HepG2 (cell line): ENCODE measurements at regions of chr5 and their contacts with region 1.

Region 1: DNA sequence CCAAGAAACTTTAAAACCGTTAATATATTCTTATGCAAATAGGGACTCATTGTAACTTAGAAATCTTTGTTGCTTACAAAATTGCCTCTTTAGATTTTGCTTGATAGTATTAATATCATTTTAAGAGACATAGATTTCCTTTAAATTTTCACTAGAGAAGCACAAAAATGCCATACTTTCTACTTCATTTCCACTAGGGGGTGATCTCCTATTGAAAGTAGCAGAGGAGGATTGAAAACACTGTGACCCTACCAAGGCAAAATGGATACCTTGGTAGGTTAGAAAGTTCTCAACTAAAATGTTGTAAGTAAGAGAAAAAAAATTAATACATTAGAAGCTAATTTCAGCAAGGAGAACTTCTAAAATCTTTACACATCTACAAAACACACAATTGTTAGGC is 204.9 kb downstream of the CHSY3 start:
- DNase-seq: peak; percentile 27
- ATAC-seq: 0 out of 3 replicates have a peak, but pooled peaks have one; percentile 42
- H3K4me3 ChIP-seq: no peak overlapping the region
- H3K27ac ChIP-seq: no peak overlapping the region
- H3K4me1 ChIP-seq: no peaks in the 10 kb centered on the region
- H3K27me3 ChIP-seq: no peaks in the 10 kb centered on the region
- CTCF ChIP-seq: peak; percentile 51
- EP300 ChIP-seq: no peak
- POLR2A ChIP-seq: no peak
- RAD21 ChIP-seq: no peak

Region 2: DNA sequence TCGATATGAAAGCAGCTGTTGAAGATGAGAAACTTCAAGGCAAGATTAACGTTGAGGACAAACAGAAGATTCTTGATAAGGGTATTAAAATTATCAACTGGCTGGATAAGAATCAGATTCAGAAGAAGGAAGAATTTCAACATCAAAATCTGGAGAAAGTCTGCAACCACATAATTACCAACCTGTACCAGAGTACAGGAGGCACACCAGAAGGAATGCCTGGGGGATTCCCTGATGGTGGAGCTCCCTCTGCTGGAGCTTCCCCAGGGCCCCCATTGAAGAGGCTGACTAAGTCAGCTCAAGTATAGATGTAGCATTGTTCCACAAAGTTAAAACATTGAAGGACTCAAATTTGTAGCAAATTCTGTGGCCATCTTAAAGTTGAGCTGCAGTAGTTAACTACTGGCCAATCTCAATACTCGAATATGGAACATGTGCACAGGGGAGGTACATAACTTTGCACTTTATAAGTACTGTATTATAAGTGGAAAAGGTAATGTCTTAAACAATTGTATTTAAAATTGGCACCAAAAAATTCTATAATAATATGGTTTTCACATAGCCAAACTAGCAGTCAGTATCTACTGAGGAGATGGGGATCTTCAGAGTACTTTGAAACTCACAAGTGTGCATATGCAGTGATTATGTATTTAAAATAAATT is 32.6 kb after region 1 on chr5:
- CTCF ChIA-PET with region 1: no interaction called
- POLR2A ChIA-PET with region 1: no interaction called
- in situ Hi-C with region 1: no loop called
- intact Hi-C with region 1: loop called (anchors 1 kb)
- DNase-seq: no peak
- ATAC-seq: peak; percentile 73; the same call in 2 of the 3 replicates
- H3K4me3 ChIP-seq: no peak overlapping the region
- H3K27ac ChIP-seq: no peak overlapping the region
- H3K4me1 ChIP-seq: no peaks in the 10 kb centered on the region
- H3K27me3 ChIP-seq: no peaks in the 10 kb centered on the region
- CTCF ChIP-seq: peak; percentile 36
- EP300 ChIP-seq: no peak
- POLR2A ChIP-seq: no peak
- RAD21 ChIP-seq: no peak

Region 3: GRCh38 chr5:130720355-130720754 is 611.2 kb after region 1 on chr5:
- CTCF ChIA-PET with region 1: interaction called, 5 read pairs
- POLR2A ChIA-PET with region 1: no interaction called
- in situ Hi-C with region 1: loop called (anchors 25 kb)
- intact Hi-C with region 1: no loop called
- DNase-seq: peak; percentile 39
- ATAC-seq: peak; percentile 97
- H3K4me3 ChIP-seq: no peak overlapping the region
- H3K27ac ChIP-seq: no peak overlapping the region
- H3K4me1 ChIP-seq: no peaks in the 10 kb centered on the region
- H3K27me3 ChIP-seq: no peaks in the 10 kb centered on the region
- CTCF ChIP-seq: peak; percentile 59
- EP300 ChIP-seq: no peak
- POLR2A ChIP-seq: no peak
- RAD21 ChIP-seq: no peak

Region 4: DNA sequence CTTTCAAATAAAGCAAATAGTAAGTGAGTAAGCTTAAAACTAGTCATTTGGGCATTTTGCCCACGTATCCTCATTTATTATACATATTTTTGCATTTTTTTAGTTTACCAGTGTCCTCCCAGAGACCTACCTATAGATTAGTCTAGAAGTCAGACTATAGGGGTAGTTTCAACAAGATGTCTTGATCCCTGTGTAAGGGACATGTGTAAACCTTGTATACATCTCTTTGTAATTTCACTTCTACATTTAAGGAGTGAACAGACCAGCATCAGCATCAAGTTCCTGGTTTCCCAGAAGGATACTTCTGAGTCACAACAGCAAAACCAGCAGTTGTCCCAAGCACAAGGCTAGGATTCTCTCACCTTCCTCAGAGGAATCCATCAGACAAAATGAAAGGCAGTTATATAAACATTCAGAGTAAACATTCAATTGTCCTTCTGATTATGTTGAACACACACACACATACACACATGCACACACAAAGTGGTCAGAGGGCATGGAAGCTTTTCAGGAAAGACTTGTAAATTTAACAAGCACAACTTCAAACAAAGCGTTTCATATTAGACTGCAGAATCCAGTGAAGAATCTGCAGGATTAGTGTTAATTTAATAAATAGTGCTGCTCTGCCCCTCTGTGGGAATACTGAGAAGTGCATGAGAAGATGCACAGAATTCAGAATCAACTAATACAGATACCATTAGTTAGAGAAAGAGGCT is 1000.5 kb after region 1 on chr5:
- CTCF ChIA-PET with region 1: interaction called, 6 read pairs
- POLR2A ChIA-PET with region 1: no interaction called
- in situ Hi-C with region 1: loop called (anchors 25 kb)
- intact Hi-C with region 1: loop called (anchors 1 kb)
- DNase-seq: peak; percentile 17
- ATAC-seq: peak; percentile 80
- H3K4me3 ChIP-seq: no peak overlapping the region
- H3K27ac ChIP-seq: no peak overlapping the region
- H3K4me1 ChIP-seq: no peaks in the 10 kb centered on the region
- H3K27me3 ChIP-seq: no peaks in the 10 kb centered on the region
- CTCF ChIP-seq: peak; percentile 65
- EP300 ChIP-seq: no peak
- POLR2A ChIP-seq: no peak
- RAD21 ChIP-seq: peak; percentile 32; the same call in 1 of the 2 replicates